Activated CD4-positive, alpha-beta memory T cell treated with anti-CD3 and anti-CD28 coated beads for 36 hours (primary cell): ENCODE measurements at regions of chr19 and their contacts with region 1.

Region 1: DNA sequence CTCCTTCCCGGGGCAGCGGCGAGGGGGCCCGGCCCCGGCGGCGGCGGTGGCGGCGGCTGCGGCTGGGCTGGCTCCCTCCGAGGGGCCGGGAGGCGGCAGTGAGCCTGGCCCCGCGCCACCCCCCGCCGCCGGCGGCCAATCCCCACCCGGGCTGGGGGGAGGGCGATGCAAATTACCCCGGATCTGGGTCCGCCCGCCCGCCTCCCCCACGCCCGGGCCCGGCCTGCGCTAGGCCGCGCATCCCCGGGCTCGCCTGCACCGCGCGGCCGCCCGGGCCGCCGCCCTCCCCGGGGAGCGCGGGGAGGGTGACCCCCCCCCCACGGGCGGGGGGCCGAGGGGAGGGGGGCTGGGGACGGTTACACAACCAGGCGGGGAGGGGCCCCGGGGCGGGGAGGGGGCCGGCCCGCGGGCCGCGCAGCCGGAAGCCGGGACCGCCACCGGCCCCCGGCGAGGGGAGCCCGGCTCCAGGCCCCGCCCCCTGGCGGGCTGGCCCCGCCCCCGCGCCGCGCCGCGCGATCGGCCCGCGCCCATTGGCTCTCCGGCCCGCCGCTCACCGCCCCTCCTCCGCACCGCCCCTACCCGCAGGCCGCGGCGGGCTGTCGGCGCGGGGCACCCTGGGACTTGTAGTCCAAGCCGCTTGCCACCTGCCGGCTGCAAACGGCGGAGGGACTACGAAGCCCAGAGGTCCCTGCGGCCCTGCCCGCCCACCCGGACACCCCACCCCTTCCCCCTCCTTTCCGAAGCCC is 1.1 kb downstream of the ZBTB7A start:
- DNase-seq: peak; percentile 97
- H3K4me3 Mint-ChIP-seq: peak overlapping the region; percentile 57
- H3K27ac Mint-ChIP-seq: no peak overlapping the region
- H3K4me1 Mint-ChIP-seq: peaks cover 41% of the 10 kb centered on the region
- H3K27me3 Mint-ChIP-seq: no peaks in the 10 kb centered on the region

Region 2: DNA sequence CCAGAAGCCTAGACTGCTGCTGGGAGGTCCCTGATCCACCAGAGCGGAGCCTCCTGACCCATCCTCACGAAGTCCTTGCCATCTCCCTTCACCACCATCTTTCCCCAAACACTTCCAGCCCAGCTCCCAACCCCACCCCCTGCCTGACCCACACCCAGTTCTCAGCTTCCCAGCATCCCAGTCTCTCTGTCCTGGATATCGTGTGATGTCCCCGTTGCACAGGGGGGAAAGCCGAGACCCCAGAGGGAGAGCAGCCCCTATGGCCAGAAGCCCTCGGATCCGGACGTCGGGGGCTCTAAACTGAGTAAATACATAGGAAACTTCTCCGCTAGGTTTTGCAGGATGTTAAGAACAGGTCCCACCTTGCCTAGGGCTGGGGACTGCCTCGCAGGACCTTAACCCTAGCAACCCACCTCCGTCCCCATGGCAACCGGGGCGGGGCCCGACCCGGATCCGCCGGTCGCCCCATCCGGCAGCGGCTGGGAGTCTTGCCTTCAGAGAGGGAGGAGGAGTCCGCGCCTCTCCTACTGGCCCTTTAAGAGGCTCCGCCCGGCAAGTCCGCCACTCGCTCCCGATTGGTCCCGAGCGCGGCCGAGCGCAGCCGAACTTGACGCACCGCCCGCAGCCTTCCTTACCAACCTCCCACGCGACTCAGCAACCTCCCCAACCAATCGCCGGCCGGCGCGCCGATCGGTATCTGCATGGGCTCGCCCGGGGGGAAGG is 493.3 kb before region 1 on chr19:
- CTCF ChIA-PET with region 1: no interaction called
- POLR2A ChIA-PET with region 1: no interaction called
- intact Hi-C with region 1: loop called (anchors 10 kb)
- DNase-seq: peak; percentile 100
- H3K4me3 Mint-ChIP-seq: peak overlapping the region; percentile 66
- H3K27ac Mint-ChIP-seq: peak overlapping the region; percentile 42
- H3K4me1 Mint-ChIP-seq: peaks cover 10% of the 10 kb centered on the region
- H3K27me3 Mint-ChIP-seq: no peaks in the 10 kb centered on the region

Region 3: GRCh38 chr19:4108767-4109625 is 43.4 kb after region 1 on chr19:
- CTCF ChIA-PET with region 1: no interaction called
- POLR2A ChIA-PET with region 1: no interaction called
- intact Hi-C with region 1: loop called (anchors 2 kb)
- DNase-seq: peak; percentile 70
- H3K4me3 Mint-ChIP-seq: peak overlapping the region; percentile 12
- H3K27ac Mint-ChIP-seq: peak overlapping the region; percentile 90
- H3K4me1 Mint-ChIP-seq: peaks cover 41% of the 10 kb centered on the region
- H3K27me3 Mint-ChIP-seq: no peaks in the 10 kb centered on the region

Region 4: DNA sequence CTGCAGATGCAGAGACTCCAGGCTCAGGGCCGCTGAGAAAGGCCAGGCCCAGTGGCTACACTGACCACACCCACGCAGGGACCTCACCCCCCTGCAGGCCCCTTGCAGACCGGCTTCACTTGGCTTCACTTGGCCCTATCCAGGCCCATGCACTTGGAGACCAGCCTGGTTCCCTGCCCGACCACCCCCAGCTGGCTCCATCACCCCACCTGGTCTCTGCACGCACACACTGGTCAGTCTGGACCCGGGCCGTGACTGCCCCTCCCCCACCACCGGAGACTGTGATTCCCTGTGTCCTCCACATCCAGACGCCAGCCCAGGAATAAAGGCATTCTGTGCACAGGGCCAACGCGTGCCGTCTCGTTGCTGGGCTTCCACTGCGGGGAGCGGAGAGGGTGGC is 158.9 kb after region 1 on chr19:
- CTCF ChIA-PET with region 1: no interaction called
- POLR2A ChIA-PET with region 1: no interaction called
- intact Hi-C with region 1: no loop called
- DNase-seq: no peak
- H3K4me3 Mint-ChIP-seq: no peak overlapping the region
- H3K27ac Mint-ChIP-seq: no peak overlapping the region
- H3K4me1 Mint-ChIP-seq: no peaks in the 10 kb centered on the region
- H3K27me3 Mint-ChIP-seq: peaks cover under 1% of the 10 kb centered on the region